GM12878 (cell line): ENCODE measurements at regions of chr1 and their contacts with region 1.

Region 1: DNA sequence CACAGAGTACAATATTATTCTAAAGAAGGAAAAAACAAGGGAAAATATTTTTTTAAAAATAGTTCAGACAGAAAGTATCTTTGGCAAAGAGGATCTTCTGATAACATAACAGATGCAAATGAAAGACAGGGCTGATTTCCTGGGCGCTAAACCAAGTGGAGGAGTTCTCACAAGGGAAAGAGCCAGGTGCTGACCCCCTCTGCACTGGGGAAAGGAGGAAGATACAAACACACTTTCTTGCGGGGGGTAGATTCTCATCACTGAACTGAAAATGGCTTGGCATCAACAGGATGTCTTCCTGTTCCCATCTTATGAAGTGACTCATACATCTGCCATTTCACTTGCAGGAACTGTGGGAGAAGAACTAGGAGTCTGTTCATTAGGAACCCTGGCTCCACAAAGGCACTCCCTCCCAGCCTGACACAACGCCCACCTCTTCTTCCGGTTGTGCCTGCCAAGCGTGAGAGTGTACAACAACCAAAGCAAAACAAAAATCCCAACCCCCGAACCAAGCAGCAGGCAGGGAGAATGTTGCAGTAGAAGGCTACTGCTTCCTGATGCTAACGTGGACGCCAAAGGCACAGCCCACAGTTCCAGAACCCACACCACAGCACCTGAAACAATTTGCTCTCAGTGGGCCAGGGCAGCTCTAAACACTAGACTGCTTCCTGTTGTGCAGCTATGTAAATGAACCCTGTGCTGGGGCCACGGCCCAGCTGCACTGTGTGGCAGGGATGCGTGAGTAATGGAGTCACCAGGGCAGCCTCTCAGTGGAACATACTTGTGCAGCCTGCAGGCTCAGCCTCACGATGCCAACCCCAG is 51.0 kb downstream of the GADD45A start:
- DNase-seq: peak; percentile 64
- ATAC-seq: peak; percentile 95
- H3K4me3 ChIP-seq: peak overlapping the region; percentile 42
- H3K27ac ChIP-seq: peak overlapping the region; percentile 79
- H3K4me1 ChIP-seq: peaks cover 35% of the 10 kb centered on the region
- H3K27me3 ChIP-seq: no peaks in the 10 kb centered on the region
- CTCF ChIP-seq: no peak
- EP300 ChIP-seq: peak in 1 of 2 experiments; percentile 35; a peak in 2 of 4 replicates
- POLR2A ChIP-seq: peak; percentile 76
- RAD21 ChIP-seq: no peak

Region 2: GRCh38 chr1:67713057-67713846 is 22.8 kb before region 1 on chr1:
- CTCF ChIA-PET with region 1: interaction called, 4 read pairs
- POLR2A ChIA-PET with region 1: interaction called, 4 read pairs
- RAD21 ChIA-PET with region 1: interaction called, 4 read pairs
- SMC1A ChIA-PET with region 1: interaction called, 17 read pairs
- in situ Hi-C with region 1: no loop called
- intact Hi-C with region 1: no loop called
- DNase-seq: no peak
- ATAC-seq: peak; percentile 70
- H3K4me3 ChIP-seq: no peak overlapping the region
- H3K27ac ChIP-seq: no peak overlapping the region
- H3K4me1 ChIP-seq: no peaks in the 10 kb centered on the region
- H3K27me3 ChIP-seq: no peaks in the 10 kb centered on the region
- CTCF ChIP-seq: no peak
- EP300 ChIP-seq: no peak
- POLR2A ChIP-seq: no peak
- RAD21 ChIP-seq: no peak

Region 3: GRCh38 chr1:67748630-67749029 is 12.6 kb after region 1 on chr1:
- CTCF ChIA-PET with region 1: interaction called, 13 read pairs
- POLR2A ChIA-PET with region 1: interaction called, 4 read pairs
- RAD21 ChIA-PET with region 1: interaction called, 11 read pairs
- SMC1A ChIA-PET with region 1: interaction called, 227 read pairs
- in situ Hi-C with region 1: no loop called
- intact Hi-C with region 1: no loop called
- DNase-seq: peak; percentile 47
- ATAC-seq: peak; percentile 88
- H3K4me3 ChIP-seq: 0 out of 2 replicates have a peak overlapping the region, but pooled peaks have one; percentile 0
- H3K27ac ChIP-seq: no peak overlapping the region
- H3K4me1 ChIP-seq: peaks cover 12% of the 10 kb centered on the region
- H3K27me3 ChIP-seq: no peaks in the 10 kb centered on the region
- CTCF ChIP-seq: no peak
- EP300 ChIP-seq: no peak
- POLR2A ChIP-seq: no peak
- RAD21 ChIP-seq: no peak

Region 4: DNA sequence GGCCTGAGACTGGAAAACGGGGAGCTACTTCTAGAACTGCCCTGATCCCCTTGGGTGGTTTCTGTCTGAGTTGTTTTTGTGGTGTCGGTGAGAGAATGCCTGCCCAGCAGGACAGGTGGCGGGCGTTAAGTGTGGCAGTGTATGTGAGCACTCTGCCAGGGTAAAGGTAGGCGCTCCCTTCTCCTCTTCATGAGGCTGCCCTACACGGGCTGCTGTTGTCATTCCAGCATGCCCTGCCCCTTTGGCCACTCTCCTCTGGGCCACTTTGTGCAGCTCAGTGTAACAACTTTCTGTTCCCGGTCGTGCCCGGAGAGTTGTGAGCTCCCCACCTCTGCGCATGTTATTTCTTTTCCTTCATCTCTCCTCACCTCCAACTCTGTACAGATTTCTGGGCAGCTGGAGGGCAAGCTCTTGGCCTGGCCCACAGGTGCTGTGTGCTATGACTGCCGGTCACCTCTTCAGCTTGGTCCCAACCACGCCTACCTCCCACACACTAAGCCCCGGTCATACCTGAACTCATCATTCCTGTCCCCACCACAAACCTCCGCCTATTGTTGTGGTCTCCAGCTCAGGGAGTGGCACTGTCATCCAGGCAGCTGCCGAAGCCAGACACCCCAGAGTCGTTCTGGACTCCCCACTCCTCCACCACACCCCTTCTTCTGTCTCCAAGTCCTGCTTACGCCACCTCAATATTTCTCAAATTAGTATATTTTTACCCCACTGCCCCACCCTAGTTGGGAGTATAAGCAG is 17.9 kb after region 1 on chr1:
- CTCF ChIA-PET with region 1: interaction called, 40 read pairs
- POLR2A ChIA-PET with region 1: interaction called, 4 read pairs
- RAD21 ChIA-PET with region 1: interaction called, 11 read pairs
- SMC1A ChIA-PET with region 1: interaction called, 227 read pairs
- in situ Hi-C with region 1: no loop called
- intact Hi-C with region 1: no loop called
- DNase-seq: no peak
- ATAC-seq: peak; percentile 72
- H3K4me3 ChIP-seq: no peak overlapping the region
- H3K27ac ChIP-seq: no peak overlapping the region
- H3K4me1 ChIP-seq: peaks cover 27% of the 10 kb centered on the region
- H3K27me3 ChIP-seq: no peaks in the 10 kb centered on the region
- CTCF ChIP-seq: no peak
- EP300 ChIP-seq: 0 out of 4 replicates have a peak, but pooled peaks of 1 of the 2 experiments have one; percentile 36
- POLR2A ChIP-seq: no peak
- RAD21 ChIP-seq: no peak